WTC11 (cell line): ENCODE measurements at regions of chr4 and their contacts with region 1.

Region 1: GRCh38 chr4:121370729-121371325 is 10.0 kb downstream of the QRFPR start:
- DNase-seq: peak; percentile 24
- ATAC-seq: no peak
- H3K4me3 Mint-ChIP-seq: no peak overlapping the region
- H3K27ac Mint-ChIP-seq: no peak overlapping the region
- H3K4me1 Mint-ChIP-seq: no peaks in the 10 kb centered on the region; the same call in 1 of the 2 replicates
- H3K27me3 Mint-ChIP-seq: no peaks in the 10 kb centered on the region
- CTCF ChIP-seq: no peak

Region 2: DNA sequence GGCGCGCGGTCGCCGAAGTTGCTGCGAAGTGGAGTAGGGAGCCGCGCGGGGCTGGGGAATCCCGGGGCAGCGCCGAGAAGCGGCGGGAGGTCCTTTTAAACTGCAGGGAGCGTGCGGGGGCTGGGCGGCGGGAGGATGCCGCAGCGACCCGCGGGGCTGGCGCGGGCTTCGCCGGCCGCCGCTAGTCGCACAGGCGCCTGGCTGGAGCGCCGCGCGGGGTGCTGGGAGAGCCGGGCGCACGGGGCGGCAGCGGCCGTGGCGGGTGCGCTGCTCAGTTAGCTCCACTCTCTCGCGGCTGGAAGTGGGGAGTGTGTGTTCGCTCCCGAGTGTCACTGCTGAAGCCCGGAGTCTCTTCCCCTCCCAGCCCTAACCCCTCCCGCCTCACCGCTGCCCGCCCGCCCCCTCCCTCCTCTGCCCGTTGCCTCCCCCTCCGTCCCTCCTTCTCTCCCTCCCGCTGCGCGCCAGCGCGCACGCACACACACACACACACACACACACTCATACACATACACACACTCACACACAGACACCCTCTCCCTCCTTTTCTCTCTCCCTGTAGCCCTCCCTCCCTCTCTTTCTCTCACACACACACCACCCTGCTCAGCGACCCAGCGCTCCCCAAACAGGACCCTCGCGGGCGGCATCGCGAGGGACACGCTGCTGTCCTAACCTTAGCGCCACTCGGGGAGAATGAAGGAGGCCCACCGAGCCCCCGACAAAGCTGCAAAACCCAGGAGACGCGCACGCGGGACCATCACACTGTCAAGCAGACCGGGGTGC is 298.4 kb before region 1 on chr4 and contains the start of gene NDNF:
- CTCF ChIA-PET with region 1: no interaction called
- POLR2A ChIA-PET with region 1: no interaction called
- DNase-seq: peak; percentile 52
- ATAC-seq: peak; percentile 25
- H3K4me3 Mint-ChIP-seq: peak within 1 kb of the TSS; percentile 88
- H3K27ac Mint-ChIP-seq: no peak within 1 kb of the TSS
- H3K4me1 Mint-ChIP-seq: peaks cover 33% of the 10 kb centered on the region
- H3K27me3 Mint-ChIP-seq: peaks cover 53% of the 10 kb centered on the region
- CTCF ChIP-seq: no peak
- total RNA-seq, gene NDNF: 2.3 to 2.5 TPM (median 2.4 TPM) in 3 replicates

Region 3: GRCh38 chr4:121307445-121308327 is 63.1 kb before region 1 on chr4:
- CTCF ChIA-PET with region 1: no interaction called
- POLR2A ChIA-PET with region 1: no interaction called
- DNase-seq: peak; percentile 45
- ATAC-seq: peak; percentile 78
- H3K4me3 Mint-ChIP-seq: no peak overlapping the region
- H3K27ac Mint-ChIP-seq: no peak overlapping the region
- H3K4me1 Mint-ChIP-seq: no peaks in the 10 kb centered on the region
- H3K27me3 Mint-ChIP-seq: no peaks in the 10 kb centered on the region
- CTCF ChIP-seq: peak; percentile 55

Region 4: DNA sequence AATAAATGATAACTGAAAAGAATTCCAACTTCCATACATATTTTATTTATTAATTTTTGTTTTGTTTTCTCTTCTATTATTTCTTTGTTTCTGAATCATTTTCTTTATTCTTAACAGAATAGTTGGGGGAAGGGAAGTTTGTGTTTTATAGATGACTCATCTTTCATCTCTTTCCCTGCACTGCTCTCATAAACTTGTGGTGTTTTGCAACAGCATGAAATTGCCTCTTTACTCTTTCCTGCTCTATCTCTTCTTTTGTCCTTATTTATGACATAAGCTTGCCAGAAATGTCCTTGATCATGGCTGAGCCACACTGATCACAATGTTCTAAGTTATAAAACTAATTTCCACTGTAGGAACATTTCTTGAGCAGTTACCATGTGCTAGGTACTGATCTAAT is 12.4 kb before region 1 on chr4:
- CTCF ChIA-PET with region 1: interaction called, 24 read pairs
- POLR2A ChIA-PET with region 1: no interaction called
- DNase-seq: no peak
- ATAC-seq: no peak
- H3K4me3 Mint-ChIP-seq: no peak overlapping the region
- H3K27ac Mint-ChIP-seq: no peak overlapping the region
- H3K4me1 Mint-ChIP-seq: no peaks in the 10 kb centered on the region
- H3K27me3 Mint-ChIP-seq: peaks cover 6% of the 10 kb centered on the region
- CTCF ChIP-seq: no peak

Region 5: GRCh38 chr4:121380776-121381462 is 10.1 kb after region 1 on chr4 and contains the start of gene QRFPR:
- CTCF ChIA-PET with region 1: interaction called, 15 read pairs
- POLR2A ChIA-PET with region 1: no interaction called
- DNase-seq: peak; percentile 55
- ATAC-seq: peak; percentile 84
- H3K4me3 Mint-ChIP-seq: peak within 1 kb of the TSS; percentile 73
- H3K27ac Mint-ChIP-seq: no peak within 1 kb of the TSS
- H3K4me1 Mint-ChIP-seq: peaks cover 9% of the 10 kb centered on the region
- H3K27me3 Mint-ChIP-seq: peaks cover 58% of the 10 kb centered on the region
- CTCF ChIP-seq: no peak
- total RNA-seq, gene QRFPR: 0.41 to 0.73 TPM (median 0.68 TPM) in 3 replicates

Region 6: GRCh38 chr4:121421594-121421993 is 50.8 kb after region 1 on chr4:
- CTCF ChIA-PET with region 1: interaction called, 37 read pairs
- POLR2A ChIA-PET with region 1: no interaction called
- DNase-seq: no peak
- ATAC-seq: peak; percentile 36; the same call in 1 of the 2 replicates
- H3K4me3 Mint-ChIP-seq: no peak overlapping the region
- H3K27ac Mint-ChIP-seq: no peak overlapping the region
- H3K4me1 Mint-ChIP-seq: no peaks in the 10 kb centered on the region
- H3K27me3 Mint-ChIP-seq: no peaks in the 10 kb centered on the region
- CTCF ChIP-seq: no peak

Region 7: GRCh38 chr4:121472937-121473721 is 102.3 kb after region 1 on chr4:
- CTCF ChIA-PET with region 1: no interaction called
- POLR2A ChIA-PET with region 1: no interaction called
- DNase-seq: no peak
- ATAC-seq: no peak
- H3K4me3 Mint-ChIP-seq: no peak overlapping the region
- H3K27ac Mint-ChIP-seq: no peak overlapping the region
- H3K4me1 Mint-ChIP-seq: peaks cover 3% of the 10 kb centered on the region
- H3K27me3 Mint-ChIP-seq: no peaks in the 10 kb centered on the region; the same call in 1 of the 2 replicates
- CTCF ChIP-seq: no peak

Region 8: GRCh38 chr4:121514443-121514842 is 143.6 kb after region 1 on chr4:
- CTCF ChIA-PET with region 1: interaction called, 12 read pairs
- POLR2A ChIA-PET with region 1: no interaction called
- DNase-seq: peak; percentile 71
- ATAC-seq: peak; percentile 100
- H3K4me3 Mint-ChIP-seq: no peak overlapping the region
- H3K27ac Mint-ChIP-seq: no peak overlapping the region
- H3K4me1 Mint-ChIP-seq: no peaks in the 10 kb centered on the region
- H3K27me3 Mint-ChIP-seq: no peaks in the 10 kb centered on the region
- CTCF ChIP-seq: peak; percentile 70